Astrocyte of the cerebellum (primary cell): ENCODE measurements at regions of chr2 and their contacts with region 1.

Region 1: GRCh38 chr2:10668402-10669012 is 21.3 kb downstream of the NOL10 start:
- DNase-seq: peak; percentile 62
- H3K4me3 ChIP-seq: no peak overlapping the region
- CTCF ChIP-seq: peak; percentile 54

Region 2: DNA sequence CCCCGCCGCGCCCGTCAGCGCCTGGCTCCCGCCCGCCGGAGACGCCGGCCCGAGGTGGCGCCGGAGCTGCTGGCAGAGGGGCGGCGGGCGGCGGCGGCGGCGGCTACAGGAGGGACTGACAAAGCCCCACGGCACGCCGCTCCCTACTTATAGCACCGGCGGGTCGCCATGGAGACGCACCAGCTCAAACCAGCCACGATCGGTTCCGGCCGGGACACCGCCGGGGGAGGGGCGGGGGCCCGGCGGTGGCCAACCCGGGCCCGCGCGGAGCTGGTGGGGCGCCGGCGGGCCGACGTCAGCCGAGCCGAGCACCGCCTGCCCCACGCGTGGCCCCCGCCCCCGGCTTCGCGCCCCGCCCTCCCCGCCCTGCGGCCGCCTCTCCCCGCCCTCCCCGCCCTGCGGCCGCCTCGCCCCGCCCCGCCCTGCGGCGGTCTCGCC is 220.3 kb before region 1 on chr2 and contains the start of gene ODC1:
- in situ Hi-C with region 1: loop called (anchors 5 kb)
- DNase-seq: peak; percentile 78
- H3K4me3 ChIP-seq: peak within 1 kb of the TSS; percentile 66
- CTCF ChIP-seq: no peak

Region 3: GRCh38 chr2:10597935-10598334 is 70.6 kb before region 1 on chr2:
- in situ Hi-C with region 1: no loop called
- DNase-seq: no peak
- H3K4me3 ChIP-seq: no peak overlapping the region
- CTCF ChIP-seq: no peak